ENCODE measurements at regions of chr20 and their contacts with region 1.

Region 1: GRCh38 chr20:9407805-9408421 is 106.5 kb upstream of the LAMP5 start:
- DNase-seq: peak in 1 of 2 donors; percentile 78
- H3K4me3 ChIP-seq: no peak overlapping the region
- H3K27ac ChIP-seq: no peak overlapping the region
- H3K4me1 ChIP-seq: peaks cover 0 to 4% of the 10 kb centered on the region in 2 donors
- H3K27me3 ChIP-seq: no peaks in the 10 kb centered on the region
- CTCF ChIP-seq: peak; percentile 67 to 86 (median 77)

Region 2: DNA sequence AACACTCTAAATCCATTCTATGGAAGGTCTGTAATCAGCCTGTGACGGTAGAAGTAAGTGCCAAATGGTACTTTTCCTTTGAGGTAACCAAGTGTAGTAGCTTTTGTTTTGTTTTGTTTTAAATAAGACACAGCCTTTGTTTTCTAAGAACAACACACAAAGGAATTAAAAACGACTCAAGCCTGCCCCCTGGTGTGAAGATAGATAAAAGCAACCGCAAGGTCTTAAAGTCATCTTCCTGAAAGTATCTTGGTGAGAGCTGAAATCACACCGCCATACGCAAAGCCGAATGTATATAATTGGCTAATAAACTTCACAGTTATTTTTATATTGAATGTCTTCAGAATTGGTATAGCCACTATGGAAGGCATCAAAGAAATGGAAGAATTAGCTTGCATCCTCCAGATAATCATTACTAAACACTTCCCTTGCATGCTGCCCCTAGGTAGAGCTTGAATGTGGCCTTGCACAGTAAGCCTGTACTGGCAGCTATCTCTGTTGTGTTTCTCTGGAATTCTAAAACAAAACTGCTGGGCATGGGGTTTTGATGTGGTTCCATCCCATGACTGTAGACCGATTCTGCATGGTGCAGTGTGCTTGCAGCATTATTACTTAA is 202.1 kb after region 1 on chr20:
- intact Hi-C with region 1: loop called (anchors 1 kb)
- DNase-seq: no peak
- H3K4me3 ChIP-seq: no peak overlapping the region
- H3K27ac ChIP-seq: no peak overlapping the region
- H3K4me1 ChIP-seq: no peaks in the 10 kb centered on the region
- H3K27me3 ChIP-seq: no peaks in the 10 kb centered on the region
- CTCF ChIP-seq: peak; percentile 47 to 74 (median 64)

Region 3: GRCh38 chr20:9912858-9913434 is 505.0 kb after region 1 on chr20:
- intact Hi-C with region 1: loop called (anchors 10 kb)
- DNase-seq: peak in 1 of 2 donors; percentile 68
- H3K4me3 ChIP-seq: no peak overlapping the region
- H3K27ac ChIP-seq: no peak overlapping the region
- H3K4me1 ChIP-seq: no peaks in the 10 kb centered on the region
- H3K27me3 ChIP-seq: no peaks in the 10 kb centered on the region
- CTCF ChIP-seq: peak; percentile 37 to 81 (median 74)

Measured in ascending aorta (tissue), 2 donors.